ENCODE measurements at regions of chr6 and their contacts with region 1.

Region 1: DNA sequence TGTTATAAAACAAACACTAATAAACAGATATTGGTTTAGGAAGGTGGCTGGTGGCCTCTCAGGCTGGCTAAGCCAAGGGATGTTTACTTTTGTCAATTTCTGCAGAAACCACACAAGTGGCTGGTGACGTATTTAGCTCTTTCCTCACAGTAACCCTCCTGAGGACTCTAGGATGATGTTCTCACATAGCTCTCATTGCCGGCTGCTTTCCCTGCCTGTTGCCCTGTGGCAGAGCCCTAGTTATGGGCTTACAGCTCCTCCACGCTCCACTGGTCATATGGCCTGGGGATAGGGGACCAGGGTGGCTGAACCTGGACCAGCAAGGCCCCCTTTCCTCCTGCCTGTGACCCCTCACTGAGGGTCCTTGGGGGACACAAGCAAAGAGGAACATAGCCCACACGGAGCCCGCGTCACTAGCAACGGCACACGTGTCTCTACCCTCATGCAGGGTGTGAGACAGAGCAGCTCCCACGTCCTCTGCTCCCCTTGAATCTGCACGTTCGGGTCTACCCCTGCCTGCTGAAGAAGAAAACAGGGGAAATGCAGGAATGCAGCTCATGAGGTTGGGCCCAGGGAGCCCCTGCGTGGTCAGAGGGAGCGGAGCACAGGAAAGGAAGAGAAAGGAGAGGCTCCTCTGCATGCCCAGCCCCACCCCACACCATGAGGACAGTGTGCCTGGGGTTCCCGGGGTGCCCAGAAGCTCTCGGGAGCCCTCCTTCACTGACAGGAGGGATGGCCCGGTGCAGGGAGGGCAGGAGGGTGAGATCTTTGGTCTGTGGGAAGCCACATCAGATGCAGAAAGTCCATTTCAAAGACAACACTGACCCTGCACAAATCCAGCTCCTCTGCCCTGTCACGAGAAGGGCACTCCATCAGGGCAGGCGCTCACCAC is 13.9 kb downstream of the RAMACL start:
- DNase-seq: no peak
- ATAC-seq: no peak
- H3K4me3 ChIP-seq: no peak overlapping the region
- H3K27ac ChIP-seq: no peak overlapping the region
- H3K4me1 ChIP-seq: peaks cover 25% of the 10 kb centered on the region
- H3K27me3 ChIP-seq: no peaks in the 10 kb centered on the region
- CTCF ChIP-seq: no peak

Region 2: GRCh38 chr6:166614589-166614988 is 42.0 kb after region 1 on chr6:
- intact Hi-C with region 1: loop called in 1 of 2 experiments (anchors 5 kb)
- DNase-seq: no peak
- ATAC-seq: peak in 3 of 4 donors; percentile 1 to 26 (median 6)
- H3K4me3 ChIP-seq: no peak overlapping the region
- H3K27ac ChIP-seq: peak overlapping the region; percentile 54
- H3K4me1 ChIP-seq: peaks cover 69% of the 10 kb centered on the region
- H3K27me3 ChIP-seq: no peaks in the 10 kb centered on the region
- CTCF ChIP-seq: no peak